ENCODE measurements at regions of chr14 and their contacts with region 1.

Region 1: GRCh38 chr14:70981000-70981952 is 74.0 kb downstream of the PCNX1 start:
- DNase-seq: peak; percentile 49
- H3K4me3 ChIP-seq: no peak overlapping the region
- H3K27ac ChIP-seq: peak overlapping the region; percentile 24
- H3K4me1 ChIP-seq: peaks cover 31% of the 10 kb centered on the region
- H3K27me3 ChIP-seq: no peaks in the 10 kb centered on the region
- CTCF ChIP-seq: no peak

Region 2: DNA sequence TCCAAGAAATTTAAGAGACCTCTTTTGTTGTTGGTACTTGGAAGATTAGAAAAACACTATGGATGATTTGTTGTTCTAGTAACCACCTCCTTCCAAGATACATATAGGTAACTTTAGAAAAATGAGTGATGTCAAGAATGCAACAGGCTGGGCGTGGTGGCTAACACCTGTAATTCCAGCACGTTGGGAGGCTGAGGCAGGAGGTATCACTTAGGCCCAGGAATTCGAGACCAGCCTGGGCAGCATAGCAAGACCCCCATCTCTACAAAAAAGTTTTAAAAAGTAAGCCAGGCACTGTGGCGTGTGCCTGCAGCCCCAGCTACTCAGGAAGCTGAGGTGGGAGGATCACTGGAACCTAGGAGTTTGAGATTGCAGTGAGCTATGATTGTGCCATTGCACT is 23.8 kb after region 1 on chr14:
- CTCF ChIA-PET with region 1: no interaction called
- POLR2A ChIA-PET with region 1: interaction called, 10 read pairs
- intact Hi-C with region 1: no loop called
- DNase-seq: no peak
- H3K4me3 ChIP-seq: no peak overlapping the region
- H3K27ac ChIP-seq: no peak overlapping the region
- H3K4me1 ChIP-seq: peaks cover 9% of the 10 kb centered on the region
- H3K27me3 ChIP-seq: no peaks in the 10 kb centered on the region
- CTCF ChIP-seq: no peak

Region 3: DNA sequence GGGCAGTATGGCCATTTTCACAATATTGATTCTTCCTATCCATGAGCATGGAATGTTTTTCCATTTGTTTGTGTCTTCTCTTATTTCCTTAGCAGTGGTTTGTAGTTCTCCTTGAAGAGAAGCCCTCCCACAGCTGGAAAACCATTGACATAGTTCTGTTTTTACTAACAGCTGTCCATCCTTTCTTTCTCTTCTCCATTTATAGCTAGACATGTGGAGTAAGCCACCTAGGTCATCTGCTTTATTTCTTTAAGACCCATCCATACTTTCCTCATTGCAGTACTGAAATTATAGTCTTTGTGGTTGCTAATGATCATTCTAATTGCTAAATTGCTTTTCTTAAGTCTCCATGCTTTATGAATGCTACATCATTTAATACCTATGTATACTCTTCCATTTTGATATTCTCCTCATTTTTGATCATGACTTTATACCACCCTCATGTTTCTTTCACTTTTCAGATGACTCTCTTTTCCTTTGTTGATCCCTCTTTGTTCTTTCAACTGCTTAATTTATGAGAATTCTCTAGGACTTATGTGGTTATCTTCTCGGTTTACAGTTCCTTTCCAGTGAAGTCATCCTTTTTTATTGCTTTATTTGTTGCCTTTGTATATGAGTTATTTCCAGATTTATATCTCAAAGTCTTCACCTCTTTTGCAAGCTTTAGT is 40.2 kb after region 1 on chr14:
- CTCF ChIA-PET with region 1: no interaction called
- POLR2A ChIA-PET with region 1: no interaction called
- intact Hi-C with region 1: no loop called
- DNase-seq: peak; percentile 47
- H3K4me3 ChIP-seq: no peak overlapping the region
- H3K27ac ChIP-seq: peak overlapping the region; percentile 2
- H3K4me1 ChIP-seq: peaks cover 9% of the 10 kb centered on the region
- H3K27me3 ChIP-seq: no peaks in the 10 kb centered on the region
- CTCF ChIP-seq: no peak

Measured in A673 (cell line).